A549 (cell line): ENCODE measurements at regions of chr14 and their contacts with region 1.

Region 1: DNA sequence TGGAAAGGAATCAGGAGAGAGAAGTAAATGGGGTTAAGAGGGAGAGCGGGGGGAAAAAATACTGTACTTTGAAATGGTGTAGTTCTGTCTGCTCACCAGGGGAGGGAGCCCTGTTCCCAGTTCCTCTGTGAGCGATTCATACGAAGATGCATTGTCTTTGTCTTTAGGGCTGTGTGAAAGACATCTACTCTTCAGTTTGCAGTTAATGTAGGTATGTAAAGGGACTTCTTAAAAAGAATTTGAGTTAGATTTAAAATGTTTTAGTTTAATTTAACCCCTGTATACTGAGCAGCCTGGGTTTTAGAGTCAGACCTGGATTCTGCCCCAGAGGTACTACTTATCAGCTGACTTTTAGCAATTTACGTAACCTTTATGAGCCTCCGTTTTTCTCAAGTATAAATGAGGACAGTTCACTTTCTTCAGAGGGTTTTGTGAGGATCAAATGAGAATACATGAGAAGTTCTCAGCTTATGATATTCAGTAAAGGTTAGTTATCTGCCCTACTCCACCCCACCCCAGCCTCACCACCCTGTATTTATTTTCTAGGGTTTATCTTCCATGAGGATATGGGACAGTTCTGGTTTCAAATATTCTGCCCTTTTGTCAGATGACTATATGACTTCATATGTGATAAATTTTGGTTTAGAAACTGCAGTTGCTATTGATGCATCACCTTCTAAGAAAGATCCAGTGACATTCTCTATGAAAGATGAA is 82.5 kb upstream of the EVL start:
- DNase-seq: peak; percentile 65 to 74
- ATAC-seq: peak; percentile 92 to 97
- H3K4me3 ChIP-seq: no peak overlapping the region
- H3K27ac ChIP-seq: peak overlapping the region; percentile 4 to 46; a peak in 2 of 6 replicates
- H3K4me1 ChIP-seq: peaks cover 23% of the 10 kb centered on the region
- CTCF ChIP-seq: peak; percentile 97
- EP300 ChIP-seq: no peak
- POLR2A ChIP-seq: no peak
- RAD21 ChIP-seq: peak; percentile 94 to 96

Region 2: GRCh38 chr14:99884834-99885648 is 97.7 kb before region 1 on chr14:
- CTCF ChIA-PET with region 1: no interaction called
- POLR2A ChIA-PET with region 1: no interaction called
- DNase-seq: peak; percentile 69 to 71
- ATAC-seq: peak; percentile 75 to 92; a peak in 4 of 6 replicates
- H3K4me3 ChIP-seq: no peak overlapping the region
- H3K27ac ChIP-seq: no peak overlapping the region
- H3K4me1 ChIP-seq: no peaks in the 10 kb centered on the region
- CTCF ChIP-seq: peak; percentile 95
- EP300 ChIP-seq: no peak
- POLR2A ChIP-seq: no peak
- RAD21 ChIP-seq: peak; percentile 91 to 94

Region 3: DNA sequence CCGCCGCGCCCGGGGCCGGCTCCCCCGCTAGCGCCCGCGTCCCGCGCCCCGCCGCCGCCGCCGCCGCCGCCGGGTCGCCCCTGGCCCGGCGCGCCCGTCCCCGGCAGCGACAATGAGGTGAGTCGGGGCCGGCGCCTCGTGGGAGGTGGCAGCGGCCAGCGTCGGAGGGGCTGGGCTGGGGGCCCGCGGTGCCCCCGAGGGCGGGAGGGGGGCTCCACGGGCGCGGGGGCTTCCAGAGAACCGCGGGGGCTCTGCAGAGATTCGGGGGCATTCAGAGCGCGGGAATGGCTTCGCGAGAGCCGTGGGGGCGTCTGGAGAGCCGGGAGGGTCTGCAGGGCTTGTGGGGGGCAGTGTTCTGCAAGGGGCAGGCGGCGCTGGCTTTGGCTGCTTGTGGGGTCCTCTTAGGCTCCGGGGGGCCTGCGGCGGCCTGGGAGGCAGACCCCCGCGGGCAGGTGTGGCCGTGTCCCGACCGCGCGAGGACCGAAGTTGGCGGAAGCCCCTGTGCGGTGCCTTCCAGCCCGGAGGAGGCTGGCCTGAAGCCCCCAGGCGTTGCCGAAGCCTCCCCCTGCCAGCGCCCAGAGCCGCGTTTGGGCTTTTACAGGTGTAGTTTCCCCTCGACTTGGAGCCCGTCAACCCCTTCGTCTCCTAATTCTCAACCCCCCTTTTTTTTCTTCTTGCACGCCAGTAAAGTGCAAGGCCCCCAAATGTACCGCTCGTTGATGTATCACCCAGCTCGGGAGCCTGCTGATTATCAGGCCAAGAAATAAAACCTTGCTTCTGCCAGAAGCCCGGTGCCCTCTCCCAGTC is 10.6 kb before region 1 on chr14:
- CTCF ChIA-PET with region 1: interaction called, 17 read pairs
- POLR2A ChIA-PET with region 1: no interaction called
- DNase-seq: peak in 1 of 2 experiments; percentile 43
- ATAC-seq: peak; percentile 21 to 35; a peak in 5 of 6 replicates
- H3K4me3 ChIP-seq: peak overlapping the region; percentile 83
- H3K27ac ChIP-seq: peak overlapping the region; percentile 79 to 87
- H3K4me1 ChIP-seq: 0 out of 3 replicates have a peak, but pooled peaks cover 3% of the 10 kb centered on the region
- CTCF ChIP-seq: no peak
- EP300 ChIP-seq: no peak
- POLR2A ChIP-seq: no peak
- RAD21 ChIP-seq: no peak

Region 4: DNA sequence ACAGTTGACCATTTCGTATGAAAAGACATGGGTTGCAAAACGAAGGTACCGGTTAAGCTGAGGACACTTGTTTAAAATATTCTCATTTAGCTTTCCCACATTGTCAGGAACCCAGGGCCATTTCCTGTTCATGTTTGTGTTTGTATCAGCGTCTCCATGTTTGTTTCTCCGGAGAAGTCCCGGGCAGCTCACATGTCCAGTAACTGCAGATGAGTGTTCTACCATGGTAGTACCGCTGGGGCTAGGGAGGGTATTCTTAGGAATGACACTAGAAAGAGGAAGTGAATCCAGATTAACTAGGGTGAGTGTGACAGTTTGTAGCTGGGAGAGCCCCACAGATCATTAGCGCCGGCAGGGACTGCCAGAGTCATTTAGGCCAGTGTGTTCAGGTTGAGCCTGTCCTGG is 32.6 kb after region 1 on chr14:
- CTCF ChIA-PET with region 1: interaction called, 13 read pairs
- POLR2A ChIA-PET with region 1: no interaction called
- DNase-seq: no peak
- ATAC-seq: no peak
- H3K4me3 ChIP-seq: no peak overlapping the region
- H3K27ac ChIP-seq: no peak overlapping the region
- H3K4me1 ChIP-seq: peaks cover 31% of the 10 kb centered on the region
- CTCF ChIP-seq: no peak
- EP300 ChIP-seq: no peak
- POLR2A ChIP-seq: no peak
- RAD21 ChIP-seq: no peak

Region 5: GRCh38 chr14:100037353-100037752 is 54.7 kb after region 1 on chr14:
- CTCF ChIA-PET with region 1: interaction called, 47 read pairs
- POLR2A ChIA-PET with region 1: no interaction called
- DNase-seq: no peak
- ATAC-seq: no peak
- H3K4me3 ChIP-seq: no peak overlapping the region
- H3K27ac ChIP-seq: peak overlapping the region in 1 of 2 experiments; percentile 13; a peak in 2 of 6 replicates
- H3K4me1 ChIP-seq: peaks cover 34% of the 10 kb centered on the region
- CTCF ChIP-seq: no peak
- EP300 ChIP-seq: no peak
- POLR2A ChIP-seq: no peak
- RAD21 ChIP-seq: no peak

Region 6: DNA sequence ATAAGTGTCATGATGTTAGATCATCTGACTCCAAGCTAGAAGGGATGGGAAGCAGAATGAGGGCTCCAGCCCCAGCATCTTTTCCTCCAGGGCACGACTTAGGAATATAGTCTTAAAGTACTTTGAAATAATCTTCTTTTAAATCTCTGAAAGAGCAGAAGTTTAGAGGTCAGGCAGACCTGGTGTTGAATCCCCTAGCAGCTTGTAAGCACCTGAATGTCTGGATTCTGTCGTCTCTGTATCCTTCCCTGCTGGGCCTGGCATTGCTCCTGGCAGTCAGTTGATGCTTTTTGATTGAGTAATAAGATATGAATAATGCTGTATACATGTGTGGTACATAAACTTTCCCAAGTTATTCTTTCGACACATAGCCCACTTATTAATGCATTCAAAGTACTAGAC is 113.9 kb after region 1 on chr14:
- CTCF ChIA-PET with region 1: interaction called, 18 read pairs
- POLR2A ChIA-PET with region 1: no interaction called
- DNase-seq: no peak
- ATAC-seq: peak; percentile 77 to 84
- H3K4me3 ChIP-seq: no peak overlapping the region
- H3K27ac ChIP-seq: peak overlapping the region; percentile 26 to 36; a peak in 4 of 6 replicates
- H3K4me1 ChIP-seq: peaks cover 14% of the 10 kb centered on the region
- CTCF ChIP-seq: no peak
- EP300 ChIP-seq: no peak
- POLR2A ChIP-seq: no peak
- RAD21 ChIP-seq: no peak

Region 7: DNA sequence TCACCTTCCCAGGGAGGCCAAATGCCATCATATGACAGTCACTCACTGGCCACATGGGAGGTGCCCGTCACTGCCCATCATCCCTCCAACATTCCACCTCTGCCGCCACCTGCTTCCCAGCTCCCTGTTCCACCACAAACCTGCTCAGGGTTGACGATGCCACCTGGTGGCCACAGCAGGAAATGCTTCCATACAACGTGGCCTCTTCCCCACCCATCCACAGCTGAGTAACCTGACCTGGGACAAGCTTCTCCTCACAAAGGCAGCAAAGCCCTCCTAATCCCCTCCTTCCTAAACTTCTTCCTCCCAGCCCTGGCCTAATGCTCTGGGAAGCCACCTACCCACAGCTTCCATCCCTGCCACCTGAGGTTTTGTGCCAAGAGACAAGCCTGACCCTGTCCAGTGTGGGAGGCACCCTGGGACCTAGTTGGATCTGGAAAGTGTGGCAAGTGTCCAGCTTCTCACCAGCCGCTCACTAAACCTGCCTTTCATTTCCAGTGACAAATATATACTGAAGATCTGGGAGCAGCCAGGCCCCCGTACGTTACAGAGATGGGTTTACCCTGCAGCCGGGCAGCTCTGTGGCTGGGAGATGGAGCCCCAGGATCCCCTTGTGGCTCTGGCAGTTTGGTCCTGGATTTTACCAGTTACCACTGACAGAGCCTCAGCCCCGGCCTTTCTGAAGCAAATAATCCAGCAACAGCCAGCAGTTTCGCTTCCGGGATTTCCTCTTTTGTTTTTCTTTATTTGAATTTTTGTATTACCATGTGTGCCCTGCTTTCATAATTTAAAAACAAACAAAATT is 172.6 kb after region 1 on chr14:
- CTCF ChIA-PET with region 1: interaction called, 21 read pairs
- POLR2A ChIA-PET with region 1: no interaction called
- DNase-seq: peak; percentile 62 to 70
- ATAC-seq: peak in 1 of 2 experiments; percentile 60; a peak in 3 of 6 replicates
- H3K4me3 ChIP-seq: no peak overlapping the region
- H3K27ac ChIP-seq: peak overlapping the region; percentile 40 to 52; a peak in 3 of 6 replicates
- H3K4me1 ChIP-seq: peaks cover 20% of the 10 kb centered on the region
- CTCF ChIP-seq: peak; percentile 31
- EP300 ChIP-seq: no peak
- POLR2A ChIP-seq: no peak
- RAD21 ChIP-seq: peak; percentile 11 to 38; a peak in 1 of 5 replicates

Region 8: GRCh38 chr14:100383727-100384158 is 401.0 kb after region 1 on chr14:
- CTCF ChIA-PET with region 1: no interaction called
- POLR2A ChIA-PET with region 1: no interaction called
- DNase-seq: peak; percentile 64 to 73
- ATAC-seq: peak; percentile 87 to 95
- H3K4me3 ChIP-seq: no peak overlapping the region
- H3K27ac ChIP-seq: peak overlapping the region; percentile 33 to 65; a peak in 2 of 6 replicates
- H3K4me1 ChIP-seq: peaks cover 38% of the 10 kb centered on the region
- CTCF ChIP-seq: peak; percentile 86
- EP300 ChIP-seq: no peak
- POLR2A ChIP-seq: no peak
- RAD21 ChIP-seq: peak; percentile 77 to 80